ENCODE measurements at regions of chr19 and their contacts with region 1.

Region 1: DNA sequence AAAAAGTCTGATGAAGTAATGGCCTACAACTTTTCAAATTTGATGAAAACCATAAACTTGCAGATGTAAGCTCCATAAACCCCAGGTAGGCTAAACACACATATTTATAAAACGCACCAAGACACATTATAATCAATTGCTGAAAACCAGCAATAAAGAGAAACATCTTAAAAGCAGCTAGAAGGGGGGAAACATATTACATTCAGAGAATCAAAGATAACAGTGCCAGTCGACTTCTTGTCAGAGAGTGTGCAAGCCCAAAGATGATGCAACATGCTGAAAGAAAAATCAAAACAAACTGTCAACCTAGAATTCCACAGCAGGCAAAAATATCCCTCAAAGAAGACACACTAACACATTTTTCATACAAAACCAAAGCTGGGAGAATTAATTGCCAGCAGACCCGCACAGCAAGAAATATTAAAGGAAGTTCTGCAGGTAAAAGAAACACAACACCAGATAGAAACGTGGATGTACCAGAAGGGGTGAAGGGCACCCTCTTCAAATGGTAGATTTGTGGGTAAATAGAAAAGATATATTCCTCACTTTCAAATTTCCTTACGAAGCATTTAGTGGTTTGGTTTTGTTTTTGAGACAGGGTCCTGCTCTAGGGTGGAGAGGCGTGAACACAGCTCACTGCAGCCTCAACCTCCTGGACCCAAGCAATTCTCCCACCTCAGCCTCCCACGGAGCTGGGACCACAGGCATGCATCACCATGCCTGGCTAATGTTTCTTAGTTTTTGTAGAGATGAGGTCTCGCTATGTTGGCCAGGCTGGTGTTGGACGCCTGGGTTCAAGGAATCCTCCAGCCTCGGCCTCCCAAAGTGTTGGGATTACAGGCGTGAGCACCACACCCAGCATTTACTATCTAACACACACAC is 16.5 kb upstream of the ATP1A3 start:
- DNase-seq: no peak
- ATAC-seq: no peak
- H3K4me3 Mint-ChIP-seq: no peak overlapping the region
- H3K27ac Mint-ChIP-seq: no peak overlapping the region
- H3K4me1 Mint-ChIP-seq: no peaks in the 10 kb centered on the region
- H3K27me3 Mint-ChIP-seq: no peaks in the 10 kb centered on the region
- CTCF ChIP-seq: no peak

Region 2: DNA sequence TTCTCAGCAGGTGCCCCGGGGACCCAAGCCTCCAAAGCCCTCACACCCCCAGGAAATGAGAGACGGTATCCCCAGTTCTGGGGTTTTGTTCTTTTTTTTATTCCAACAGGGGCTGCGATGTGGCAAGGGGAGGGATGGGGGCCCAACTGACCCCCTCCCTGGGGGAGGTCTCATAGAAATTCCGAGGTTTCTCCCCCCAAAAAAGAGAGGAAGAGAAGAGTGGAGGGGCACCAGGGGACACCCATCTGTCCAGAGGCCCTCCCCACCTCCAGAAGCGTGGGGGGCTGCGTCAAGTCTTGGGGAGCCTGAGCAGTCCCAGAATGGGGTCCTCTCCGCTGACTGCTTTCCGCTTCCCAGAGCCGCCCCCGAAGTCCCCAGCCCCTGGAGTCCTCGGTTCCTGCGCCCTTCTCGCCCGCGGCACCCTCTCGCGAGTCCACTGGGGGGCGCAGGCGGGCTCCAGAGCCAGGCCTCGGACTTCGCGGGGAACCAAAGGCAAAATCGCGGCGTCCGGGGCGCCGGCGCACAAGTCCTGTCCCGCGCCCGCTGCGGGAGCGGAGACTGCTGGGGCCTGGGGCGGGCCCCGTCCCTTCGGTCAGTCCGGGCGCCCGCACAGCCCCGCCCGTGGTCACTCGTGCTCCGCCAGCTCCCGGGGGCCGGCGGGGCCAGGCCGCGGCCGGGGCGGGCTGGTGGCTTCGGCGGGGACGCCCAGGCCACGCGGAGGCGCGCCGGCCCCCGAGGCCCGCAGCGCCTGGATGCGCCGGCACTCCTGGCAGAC is 12.1 kb before region 1 on chr19:
- CTCF ChIA-PET with region 1: interaction called, 11 read pairs
- POLR2A ChIA-PET with region 1: interaction called, 4 read pairs
- DNase-seq: peak; percentile 80
- ATAC-seq: peak; percentile 30
- H3K4me3 Mint-ChIP-seq: peak overlapping the region; percentile 72
- H3K27ac Mint-ChIP-seq: no peak overlapping the region
- H3K4me1 Mint-ChIP-seq: peaks cover 23% of the 10 kb centered on the region
- H3K27me3 Mint-ChIP-seq: peaks cover 69% of the 10 kb centered on the region
- CTCF ChIP-seq: peak; percentile 68

Region 3: DNA sequence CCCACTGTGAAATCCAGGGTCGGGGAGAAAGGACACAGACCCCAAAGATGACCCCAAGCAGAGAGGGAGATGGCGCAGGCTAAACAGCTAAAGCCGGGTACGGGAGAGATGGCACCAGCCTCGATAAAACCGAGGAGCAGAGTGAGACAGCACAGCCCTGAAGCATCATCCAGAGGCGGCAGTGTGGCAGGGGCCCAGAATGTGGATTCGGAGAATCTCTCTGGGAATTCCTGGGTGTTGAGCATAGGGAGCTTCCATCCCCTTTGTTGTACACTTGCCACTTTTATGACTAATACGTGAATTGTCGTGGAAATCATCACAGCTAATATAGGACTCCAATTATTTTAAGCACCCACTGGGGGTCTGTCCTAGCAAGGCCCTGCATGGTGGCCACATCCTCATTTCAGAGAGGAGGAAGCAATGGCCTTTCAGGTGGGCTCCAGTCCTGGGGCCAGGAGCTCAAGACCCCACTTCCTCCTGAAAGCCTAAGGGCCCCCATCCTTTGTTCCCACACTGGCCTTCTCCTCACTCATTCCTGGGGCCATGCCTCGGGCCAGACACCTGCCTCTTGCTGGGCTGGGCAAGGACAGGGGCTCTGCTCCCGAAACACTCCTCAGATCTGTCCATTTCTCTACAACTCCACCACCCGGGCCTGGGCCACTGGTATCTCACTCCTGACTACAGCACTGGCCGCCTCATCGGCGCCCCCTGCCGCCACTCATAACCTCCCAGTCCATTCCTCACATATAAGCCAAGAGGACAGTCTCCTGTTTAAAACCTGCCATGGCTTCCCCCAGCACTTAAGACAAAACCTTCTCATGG is 12.8 kb after region 1 on chr19:
- CTCF ChIA-PET with region 1: interaction called, 17 read pairs
- POLR2A ChIA-PET with region 1: no interaction called
- DNase-seq: peak; percentile 78
- ATAC-seq: peak; percentile 84
- H3K4me3 Mint-ChIP-seq: no peak overlapping the region
- H3K27ac Mint-ChIP-seq: peak overlapping the region; percentile 78; the same call in 1 of the 2 replicates
- H3K4me1 Mint-ChIP-seq: peaks cover 1% of the 10 kb centered on the region
- H3K27me3 Mint-ChIP-seq: no peaks in the 10 kb centered on the region
- CTCF ChIP-seq: peak; percentile 34; the same call in 1 of the 2 replicates